B cell (primary cell): ENCODE measurements at regions of chr1 and their contacts with region 1.

Region 1: DNA sequence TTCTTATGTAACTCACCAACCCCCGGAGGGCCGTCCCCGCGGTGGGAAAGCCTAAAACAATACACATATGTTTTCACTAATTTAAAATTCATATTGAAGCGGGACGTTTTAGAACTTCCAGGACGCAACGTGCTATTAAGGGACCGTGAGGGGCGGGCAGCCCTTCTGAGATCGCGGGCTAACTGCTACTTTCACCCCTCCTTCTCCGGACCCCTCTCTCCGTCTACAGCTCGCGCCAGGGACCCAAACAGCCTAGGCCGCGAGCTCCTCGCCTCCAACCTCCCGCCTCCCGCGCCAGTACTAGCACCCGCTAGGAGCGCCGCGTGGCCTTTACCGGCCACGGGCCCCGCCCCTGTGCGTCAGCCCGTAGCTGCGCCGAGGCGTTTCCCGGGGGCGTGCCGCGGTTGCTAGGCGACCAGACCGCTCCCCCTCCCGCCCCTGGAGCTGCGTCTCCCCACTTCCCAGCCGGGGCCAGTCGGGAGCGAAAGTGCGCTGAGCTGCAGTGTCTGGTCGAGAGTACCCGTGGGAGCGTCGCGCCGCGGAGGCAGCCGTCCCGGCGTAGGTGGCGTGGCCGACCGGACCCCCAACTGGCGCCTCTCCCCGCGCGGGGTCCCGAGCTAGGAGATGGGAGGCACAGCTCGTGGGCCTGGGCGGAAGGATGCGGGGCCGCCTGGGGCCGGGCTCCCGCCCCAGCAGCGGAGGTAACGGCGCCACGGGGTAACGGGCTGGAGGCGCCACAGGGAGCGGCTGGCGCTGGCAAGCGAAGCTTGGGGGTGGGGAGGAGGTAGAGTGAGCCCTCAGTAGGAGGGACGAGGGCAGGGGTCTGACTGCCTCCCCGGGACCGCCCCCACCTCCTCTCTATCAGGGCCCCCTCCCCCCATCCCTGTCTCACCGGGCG is at the start of gene DYRK3:
- DNase-seq: peak; percentile 89
- ATAC-seq: peak; percentile 93
- H3K4me3 ChIP-seq: peak within 1 kb of the TSS; percentile 54 to 77 (median 67)
- H3K4me3 Mint-ChIP-seq: peak within 1 kb of the TSS; percentile 92
- H3K27ac ChIP-seq: no peak within 1 kb of the TSS
- H3K27ac Mint-ChIP-seq: peak within 1 kb of the TSS; percentile 74
- H3K4me1 ChIP-seq: peaks cover 17 to 22% of the 10 kb centered on the region in 2 donors
- H3K4me1 Mint-ChIP-seq: peaks cover 29% of the 10 kb centered on the region
- H3K27me3 ChIP-seq: peaks cover 0 to 11% (median 7%) of the 10 kb centered on the region in 4 experiments
- H3K27me3 Mint-ChIP-seq: peaks cover 7% of the 10 kb centered on the region
- CTCF ChIP-seq: no peak
- total RNA-seq, gene DYRK3: 0.30 and 0.80 TPM in 2 replicates

Region 2: GRCh38 chr1:206430031-206430983 is 205.0 kb before region 1 on chr1:
- CTCF ChIA-PET with region 1: no interaction called
- POLR2A ChIA-PET with region 1: no interaction called
- intact Hi-C with region 1: no loop called
- DNase-seq: no peak
- ATAC-seq: no peak
- H3K4me3 ChIP-seq: no peak overlapping the region
- H3K4me3 Mint-ChIP-seq: no peak overlapping the region
- H3K27ac ChIP-seq: no peak overlapping the region
- H3K27ac Mint-ChIP-seq: no peak overlapping the region
- H3K4me1 ChIP-seq: no peaks in the 10 kb centered on the region
- H3K4me1 Mint-ChIP-seq: no peaks in the 10 kb centered on the region
- H3K27me3 ChIP-seq: no peaks in the 10 kb centered on the region
- H3K27me3 Mint-ChIP-seq: no peaks in the 10 kb centered on the region
- CTCF ChIP-seq: no peak

Region 3: GRCh38 chr1:206479183-206480125 is 155.9 kb before region 1 on chr1:
- CTCF ChIA-PET with region 1: interaction called, 7 read pairs
- POLR2A ChIA-PET with region 1: no interaction called
- intact Hi-C with region 1: loop called (anchors 1 kb)
- DNase-seq: peak; percentile 80
- ATAC-seq: peak; percentile 79
- H3K4me3 ChIP-seq: no peak overlapping the region
- H3K4me3 Mint-ChIP-seq: no peak overlapping the region
- H3K27ac ChIP-seq: no peak overlapping the region
- H3K27ac Mint-ChIP-seq: peak overlapping the region; percentile 42
- H3K4me1 ChIP-seq: no peaks in the 10 kb centered on the region
- H3K4me1 Mint-ChIP-seq: peaks cover 4% of the 10 kb centered on the region
- H3K27me3 ChIP-seq: no peaks in the 10 kb centered on the region
- H3K27me3 Mint-ChIP-seq: no peaks in the 10 kb centered on the region
- CTCF ChIP-seq: peak; percentile 78

Region 4: DNA sequence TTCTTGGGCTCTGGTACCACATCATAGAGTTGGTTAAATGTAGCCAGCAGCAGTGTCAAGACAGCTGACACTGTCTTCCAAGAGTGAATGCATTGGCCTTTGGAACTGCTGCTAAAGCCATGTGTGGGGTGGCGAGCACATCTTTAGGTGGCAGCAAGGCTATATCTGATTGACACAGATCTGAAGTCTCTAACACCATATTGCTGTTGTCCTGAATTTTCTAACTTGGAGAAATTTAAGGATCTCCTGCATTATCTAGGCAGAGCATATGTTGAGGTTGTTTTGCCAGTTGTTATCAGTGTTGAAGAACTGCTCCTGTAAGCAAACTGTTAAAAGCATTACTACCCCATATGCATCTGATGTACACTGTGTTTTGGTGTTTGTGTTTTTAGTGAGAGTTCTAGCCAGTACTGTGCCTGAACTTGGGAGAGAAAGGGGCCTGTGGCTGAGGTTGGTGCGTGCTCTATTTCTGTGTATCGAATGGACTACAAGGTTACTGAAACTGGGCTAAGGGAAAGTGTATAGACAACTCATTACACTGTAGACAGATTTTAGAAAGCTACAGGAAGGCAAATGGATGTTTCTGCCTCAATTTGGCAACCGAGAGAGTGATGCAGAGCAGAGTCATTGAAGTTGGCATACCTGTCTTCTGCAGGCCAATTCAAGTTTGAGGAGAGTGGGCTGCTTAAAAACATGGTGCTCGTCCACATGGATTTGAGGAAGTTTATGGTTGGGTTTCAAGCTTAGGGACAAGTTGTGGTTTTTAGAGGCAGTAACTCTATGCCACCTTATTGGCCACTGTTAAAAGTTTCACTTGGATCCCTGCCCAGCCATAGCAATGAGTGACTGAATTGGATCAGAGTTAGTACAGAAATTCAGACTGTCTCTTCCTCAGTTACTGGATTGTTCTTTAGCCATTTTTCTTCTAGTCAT is 16.9 kb after region 1 on chr1:
- CTCF ChIA-PET with region 1: interaction called, 215 read pairs
- POLR2A ChIA-PET with region 1: no interaction called
- intact Hi-C with region 1: no loop called
- DNase-seq: no peak
- ATAC-seq: no peak
- H3K4me3 ChIP-seq: no peak overlapping the region
- H3K4me3 Mint-ChIP-seq: no peak overlapping the region
- H3K27ac ChIP-seq: no peak overlapping the region
- H3K27ac Mint-ChIP-seq: no peak overlapping the region
- H3K4me1 ChIP-seq: peaks cover 0 to under 1% of the 10 kb centered on the region in 2 donors
- H3K4me1 Mint-ChIP-seq: peaks cover under 1% of the 10 kb centered on the region
- H3K27me3 ChIP-seq: peaks cover 0 to 6% (median under 1%) of the 10 kb centered on the region in 4 experiments
- H3K27me3 Mint-ChIP-seq: peaks cover 4% of the 10 kb centered on the region
- CTCF ChIP-seq: no peak

Region 5: GRCh38 chr1:206684478-206685333 is 49.4 kb after region 1 on chr1 and contains the start of gene MAPKAPK2:
- CTCF ChIA-PET with region 1: interaction called, 3 read pairs
- POLR2A ChIA-PET with region 1: interaction called, 5 read pairs
- intact Hi-C with region 1: loop called (anchors 2 kb)
- DNase-seq: peak; percentile 83
- ATAC-seq: peak; percentile 70
- H3K4me3 ChIP-seq: peak within 1 kb of the TSS; percentile 69 to 91 (median 87)
- H3K4me3 Mint-ChIP-seq: peak within 1 kb of the TSS; percentile 100
- H3K27ac ChIP-seq: peak within 1 kb of the TSS; percentile 76 to 86
- H3K27ac Mint-ChIP-seq: peak within 1 kb of the TSS; percentile 96
- H3K4me1 ChIP-seq: peaks cover 54 to 72% of the 10 kb centered on the region in 2 donors
- H3K4me1 Mint-ChIP-seq: peaks cover 82% of the 10 kb centered on the region
- H3K27me3 ChIP-seq: no peaks in the 10 kb centered on the region
- H3K27me3 Mint-ChIP-seq: no peaks in the 10 kb centered on the region
- CTCF ChIP-seq: no peak
- total RNA-seq, gene MAPKAPK2: 85.8 and 91.1 TPM in 2 replicates

Region 6: DNA sequence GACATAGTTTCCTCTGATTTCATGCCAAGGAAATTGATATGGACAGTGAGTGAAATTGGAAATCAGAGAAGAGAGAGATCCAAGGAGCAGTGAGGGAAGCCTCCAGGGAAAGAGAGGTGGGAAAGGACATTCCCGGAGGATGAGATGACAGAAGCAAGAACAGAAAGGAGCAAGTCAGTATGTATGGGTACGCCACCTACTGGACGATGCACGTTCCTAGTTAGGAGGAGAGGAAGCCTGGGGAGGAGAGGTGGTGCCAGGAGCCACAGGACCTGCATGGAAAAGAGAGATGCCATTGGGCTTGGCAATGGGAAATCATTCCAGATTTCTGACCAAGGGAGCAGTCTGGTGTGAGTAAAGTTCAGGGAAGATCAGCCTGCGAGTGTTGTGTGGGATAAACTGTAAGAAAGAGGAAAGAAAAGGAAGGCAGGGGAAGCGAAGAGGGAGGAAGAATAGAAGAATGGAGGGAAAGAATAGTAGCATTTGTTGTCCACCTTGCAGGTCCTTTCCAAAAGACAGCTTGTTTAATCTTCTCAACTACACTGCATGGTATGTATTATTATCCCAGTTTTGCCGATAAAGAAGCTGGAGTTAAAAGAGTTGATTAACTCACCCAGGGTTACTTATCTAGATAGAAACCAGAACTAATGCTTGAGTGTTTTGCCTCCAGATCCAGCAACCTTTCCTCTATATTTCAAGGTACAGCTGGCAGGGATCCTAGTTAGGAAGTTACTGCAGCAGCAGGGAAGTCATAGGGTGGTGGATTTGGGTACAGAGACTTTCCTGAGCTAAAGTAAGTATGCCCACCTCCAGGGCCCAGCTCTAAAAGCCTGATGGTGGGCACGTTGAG is 369.9 kb after region 1 on chr1:
- CTCF ChIA-PET with region 1: interaction called, 13 read pairs
- POLR2A ChIA-PET with region 1: no interaction called
- intact Hi-C with region 1: no loop called
- DNase-seq: peak; percentile 57
- ATAC-seq: peak; percentile 47
- H3K4me3 ChIP-seq: no peak overlapping the region
- H3K4me3 Mint-ChIP-seq: no peak overlapping the region
- H3K27ac ChIP-seq: no peak overlapping the region
- H3K27ac Mint-ChIP-seq: no peak overlapping the region
- H3K4me1 ChIP-seq: peaks cover 3 to 4% of the 10 kb centered on the region in 2 donors
- H3K4me1 Mint-ChIP-seq: peaks cover 2% of the 10 kb centered on the region
- H3K27me3 ChIP-seq: peaks cover 0 to 9% (median 2%) of the 10 kb centered on the region in 4 experiments
- H3K27me3 Mint-ChIP-seq: peaks cover 17% of the 10 kb centered on the region
- CTCF ChIP-seq: peak; percentile 87